ENCODE measurements at regions of chr2 and their contacts with region 1.

Region 1: DNA sequence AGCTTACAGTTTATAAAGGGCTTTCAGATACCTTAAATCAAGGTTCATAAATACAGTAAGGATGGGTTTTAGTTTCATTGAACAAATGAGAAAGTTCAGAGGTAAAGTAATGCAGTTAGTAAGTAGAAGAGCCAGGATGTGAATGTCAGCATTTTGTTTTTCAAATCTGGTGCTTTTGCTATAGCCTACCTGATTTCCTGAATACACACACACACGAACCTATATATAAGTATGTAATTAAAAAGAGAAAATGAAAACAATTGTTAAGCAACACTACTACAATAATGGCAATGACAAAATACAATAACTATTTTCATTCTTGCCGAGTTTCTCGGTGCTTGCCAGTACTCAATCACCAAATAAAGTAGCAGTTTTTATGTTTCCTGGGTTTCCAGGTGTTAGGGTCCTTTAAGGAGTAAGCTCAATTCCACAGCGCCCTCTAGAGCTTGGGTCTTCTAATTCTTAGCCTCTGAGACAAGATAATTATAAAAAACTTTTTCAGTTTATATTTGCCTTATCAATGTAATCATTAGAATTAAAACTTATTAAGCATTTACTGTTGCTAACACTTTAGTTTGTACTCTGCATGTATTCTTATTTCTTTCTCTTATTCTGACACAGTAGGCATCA is 512.9 kb upstream of the ACVR2A start:
- DNase-seq: peak in 22 of 35 experiments; percentile 4 to 58 (median 20)
- ATAC-seq: peak; percentile 59 to 78 (median 67)
- H3K4me3 ChIP-seq: no peak overlapping the region
- H3K4me3 Mint-ChIP-seq: peak overlapping the region in 1 of 3 donors; percentile 26
- H3K27ac ChIP-seq: no peak overlapping the region
- H3K27ac Mint-ChIP-seq: peak overlapping the region; percentile 38 to 40
- H3K4me1 ChIP-seq: no peaks in the 10 kb centered on the region
- H3K4me1 Mint-ChIP-seq: peaks cover 15 to 21% (median 18%) of the 10 kb centered on the region in 3 donors
- H3K27me3 ChIP-seq: no peaks in the 10 kb centered on the region
- H3K27me3 Mint-ChIP-seq: peaks cover 0 to 4% of the 10 kb centered on the region in 2 donors

Region 2: DNA sequence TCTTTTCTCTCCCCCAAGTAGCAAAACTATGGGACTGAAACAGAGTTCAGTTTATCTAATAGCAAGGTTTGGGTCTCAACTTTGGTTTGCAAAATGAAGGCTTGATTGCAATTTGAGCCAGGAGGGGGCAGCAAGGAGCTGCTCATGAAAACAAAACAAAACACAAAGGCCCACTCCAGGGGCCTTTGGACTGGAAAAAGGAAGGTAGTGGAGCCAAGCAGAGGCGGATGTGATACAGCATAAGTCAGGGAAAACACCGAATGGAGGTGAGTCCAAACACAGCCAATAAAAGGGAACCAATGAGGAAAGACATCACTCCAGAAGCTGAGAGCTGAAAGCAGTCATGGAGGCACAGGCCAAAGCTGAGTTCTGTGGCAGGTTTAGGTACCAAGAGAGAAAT is 286.8 kb before region 1 on chr2:
- CTCF ChIA-PET with region 1: interaction called in 1 of 2 experiments, 13 read pairs
- POLR2A ChIA-PET with region 1: no interaction called
- DNase-seq: peak in 25 of 35 experiments; percentile 0 to 49 (median 12)
- ATAC-seq: no peak
- H3K4me3 ChIP-seq: no peak overlapping the region
- H3K4me3 Mint-ChIP-seq: no peak overlapping the region
- H3K27ac ChIP-seq: no peak overlapping the region
- H3K27ac Mint-ChIP-seq: peak overlapping the region in 1 of 2 donors; percentile 20
- H3K4me1 ChIP-seq: no peaks in the 10 kb centered on the region
- H3K4me1 Mint-ChIP-seq: peaks cover 0 to 2% (median 0%) of the 10 kb centered on the region in 3 donors
- H3K27me3 ChIP-seq: no peaks in the 10 kb centered on the region
- H3K27me3 Mint-ChIP-seq: no peaks in the 10 kb centered on the region

Region 3: DNA sequence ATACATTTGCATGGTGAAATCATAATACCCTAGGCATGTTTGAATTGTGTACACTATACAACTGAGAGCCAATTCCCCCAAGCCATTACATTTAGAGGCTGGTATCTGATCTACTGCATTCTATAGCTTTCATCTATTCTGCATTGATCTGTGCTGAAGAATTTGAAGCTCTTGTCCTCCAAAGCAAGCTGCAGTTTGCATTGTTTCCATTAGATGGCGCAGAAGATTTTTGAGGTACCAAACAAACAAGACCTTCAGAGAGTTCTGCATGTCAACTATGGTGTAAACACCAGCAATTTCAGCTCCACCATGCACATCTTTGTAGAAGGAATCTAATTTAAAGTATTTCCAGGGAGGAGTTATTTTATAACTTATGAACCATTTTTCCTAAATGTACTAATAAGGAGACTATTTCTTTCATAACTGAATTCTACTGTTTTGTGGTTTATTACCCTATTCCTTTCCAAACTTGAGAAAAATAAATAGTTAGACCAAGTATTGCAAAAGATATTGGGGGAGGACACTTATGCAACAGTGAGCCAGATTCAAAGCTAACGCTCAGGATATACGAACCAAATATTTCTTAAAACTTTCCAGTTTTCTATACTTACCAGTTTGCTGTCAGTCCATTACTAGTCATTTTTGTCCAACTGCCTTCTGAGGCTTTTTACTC is 248.9 kb before region 1 on chr2:
- CTCF ChIA-PET with region 1: interaction called in 1 of 2 experiments, 12 read pairs
- POLR2A ChIA-PET with region 1: no interaction called
- DNase-seq: peak in 26 of 35 experiments; percentile 2 to 70 (median 16)
- ATAC-seq: peak in 3 of 4 experiments; percentile 36 to 60 (median 41)
- H3K4me3 ChIP-seq: no peak overlapping the region
- H3K4me3 Mint-ChIP-seq: no peak overlapping the region
- H3K27ac ChIP-seq: no peak overlapping the region
- H3K27ac Mint-ChIP-seq: no peak overlapping the region
- H3K4me1 ChIP-seq: no peaks in the 10 kb centered on the region
- H3K4me1 Mint-ChIP-seq: peaks cover 0 to 5% (median 0%) of the 10 kb centered on the region in 3 donors
- H3K27me3 ChIP-seq: no peaks in the 10 kb centered on the region
- H3K27me3 Mint-ChIP-seq: peaks cover 0 to 13% of the 10 kb centered on the region in 2 donors

Region 4: DNA sequence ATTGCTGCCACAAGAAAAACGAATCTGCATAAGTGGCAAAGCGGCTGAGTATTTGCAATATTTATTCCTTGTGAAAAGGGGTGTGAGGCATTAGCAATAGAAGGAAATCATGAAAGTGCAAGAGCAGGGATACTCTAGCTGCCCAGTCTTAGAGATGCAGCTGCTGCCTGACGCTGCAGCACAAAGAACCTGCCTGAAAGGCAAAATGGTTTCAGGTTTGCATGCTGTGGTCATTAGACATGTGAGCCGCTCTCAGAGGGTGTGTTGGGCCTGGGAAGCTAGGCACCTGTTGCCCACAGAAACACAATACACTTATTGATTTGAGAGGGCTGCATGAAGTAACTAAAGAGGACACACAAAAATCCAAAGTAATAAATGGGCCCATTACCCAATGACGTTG is 20.4 kb after region 1 on chr2:
- CTCF ChIA-PET with region 1: no interaction called
- POLR2A ChIA-PET with region 1: no interaction called
- DNase-seq: no peak
- ATAC-seq: no peak
- H3K4me3 ChIP-seq: no peak overlapping the region
- H3K4me3 Mint-ChIP-seq: no peak overlapping the region
- H3K27ac ChIP-seq: no peak overlapping the region
- H3K27ac Mint-ChIP-seq: no peak overlapping the region
- H3K4me1 ChIP-seq: no peaks in the 10 kb centered on the region
- H3K4me1 Mint-ChIP-seq: peaks cover 0 to 2% (median 2%) of the 10 kb centered on the region in 3 donors
- H3K27me3 ChIP-seq: no peaks in the 10 kb centered on the region
- H3K27me3 Mint-ChIP-seq: no peaks in the 10 kb centered on the region

Region 5: DNA sequence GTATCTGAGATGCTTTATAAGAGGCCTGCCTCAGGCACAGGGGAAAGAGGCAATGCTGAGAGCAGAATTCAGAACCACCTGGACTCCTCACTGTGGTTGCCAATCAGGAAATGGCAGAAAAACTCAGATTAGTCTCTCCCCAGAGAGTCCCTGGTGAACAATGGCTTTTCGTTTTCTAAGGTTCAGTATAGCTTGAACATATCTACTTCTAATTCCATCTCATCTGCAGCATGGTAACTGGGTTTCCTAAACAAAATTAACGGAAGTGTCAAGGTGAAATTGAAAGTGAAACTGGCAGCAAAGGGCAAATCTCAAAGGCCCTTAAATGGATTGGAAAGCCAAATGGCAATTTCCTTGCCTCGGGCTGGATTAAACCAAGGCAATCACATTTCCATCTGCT is 32.7 kb after region 1 on chr2:
- CTCF ChIA-PET with region 1: no interaction called
- POLR2A ChIA-PET with region 1: no interaction called
- DNase-seq: peak in 1 of 35 experiments; percentile 27
- ATAC-seq: peak in 2 of 4 experiments; percentile 31 to 61
- H3K4me3 ChIP-seq: no peak overlapping the region
- H3K4me3 Mint-ChIP-seq: peak overlapping the region; percentile 31 to 56 (median 44)
- H3K27ac ChIP-seq: peak overlapping the region; percentile 5
- H3K27ac Mint-ChIP-seq: peak overlapping the region; percentile 36 to 65
- H3K4me1 ChIP-seq: peaks cover 0 to 4% of the 10 kb centered on the region in 2 experiments
- H3K4me1 Mint-ChIP-seq: peaks cover 9 to 12% (median 10%) of the 10 kb centered on the region in 3 donors
- H3K27me3 ChIP-seq: no peaks in the 10 kb centered on the region
- H3K27me3 Mint-ChIP-seq: peaks cover 0 to 5% of the 10 kb centered on the region in 2 donors

Measured in T-cell (primary cell).